SK-N-SH (cell line): ENCODE measurements at regions of chr13 and their contacts with region 1.

Region 1: DNA sequence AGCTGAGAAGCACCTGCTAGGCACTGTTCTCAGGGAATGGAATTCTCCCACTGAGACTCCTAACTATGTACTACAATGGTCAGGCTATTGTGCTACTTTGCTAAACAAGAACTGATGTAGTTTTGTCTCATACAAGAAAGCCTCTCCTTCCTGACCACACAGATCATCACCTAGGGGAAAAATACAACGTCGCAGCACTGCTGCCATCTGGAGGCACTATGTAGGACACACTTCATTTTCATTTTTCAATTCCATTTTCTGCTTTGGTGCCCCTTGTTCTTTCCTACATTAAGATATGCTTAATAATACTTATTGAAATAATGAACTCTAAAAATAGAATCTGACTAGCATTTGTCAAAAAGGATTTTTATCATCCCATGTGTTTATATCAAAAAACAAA is 21.1 kb downstream of the PROSER1 start:
- DNase-seq: peak; percentile 51
- H3K4me3 ChIP-seq: no peak overlapping the region
- H3K27ac ChIP-seq: no peak overlapping the region
- H3K4me1 ChIP-seq: no peaks in the 10 kb centered on the region
- H3K27me3 ChIP-seq: no peaks in the 10 kb centered on the region
- CTCF ChIP-seq: peak; percentile 61
- EP300 ChIP-seq: no peak
- RAD21 ChIP-seq: peak; percentile 75

Region 2: DNA sequence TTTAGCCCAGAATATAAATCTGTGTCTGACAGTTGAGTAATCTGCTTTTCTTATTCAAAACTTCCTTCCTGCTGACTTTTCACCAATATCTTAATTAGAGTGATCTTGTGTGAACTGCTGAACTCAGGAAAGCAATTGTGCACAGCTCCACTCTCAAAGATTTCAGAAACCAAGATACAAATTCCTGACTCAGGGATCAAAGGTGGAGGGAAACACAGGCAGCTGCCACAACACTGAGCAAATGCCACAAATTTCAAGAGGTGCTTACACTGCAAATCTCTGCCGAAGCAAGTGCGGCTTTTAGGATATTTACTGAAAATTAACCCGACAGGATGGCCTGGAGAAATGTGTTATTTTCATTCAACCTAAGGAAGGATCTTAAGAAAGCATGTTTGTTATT is 137.5 kb before region 1 on chr13:
- CTCF ChIA-PET with region 1: no interaction called
- POLR2A ChIA-PET with region 1: no interaction called
- DNase-seq: no peak
- H3K4me3 ChIP-seq: no peak overlapping the region
- H3K27ac ChIP-seq: no peak overlapping the region
- H3K4me1 ChIP-seq: no peaks in the 10 kb centered on the region
- H3K27me3 ChIP-seq: no peaks in the 10 kb centered on the region
- CTCF ChIP-seq: no peak
- EP300 ChIP-seq: no peak
- RAD21 ChIP-seq: no peak

Region 3: DNA sequence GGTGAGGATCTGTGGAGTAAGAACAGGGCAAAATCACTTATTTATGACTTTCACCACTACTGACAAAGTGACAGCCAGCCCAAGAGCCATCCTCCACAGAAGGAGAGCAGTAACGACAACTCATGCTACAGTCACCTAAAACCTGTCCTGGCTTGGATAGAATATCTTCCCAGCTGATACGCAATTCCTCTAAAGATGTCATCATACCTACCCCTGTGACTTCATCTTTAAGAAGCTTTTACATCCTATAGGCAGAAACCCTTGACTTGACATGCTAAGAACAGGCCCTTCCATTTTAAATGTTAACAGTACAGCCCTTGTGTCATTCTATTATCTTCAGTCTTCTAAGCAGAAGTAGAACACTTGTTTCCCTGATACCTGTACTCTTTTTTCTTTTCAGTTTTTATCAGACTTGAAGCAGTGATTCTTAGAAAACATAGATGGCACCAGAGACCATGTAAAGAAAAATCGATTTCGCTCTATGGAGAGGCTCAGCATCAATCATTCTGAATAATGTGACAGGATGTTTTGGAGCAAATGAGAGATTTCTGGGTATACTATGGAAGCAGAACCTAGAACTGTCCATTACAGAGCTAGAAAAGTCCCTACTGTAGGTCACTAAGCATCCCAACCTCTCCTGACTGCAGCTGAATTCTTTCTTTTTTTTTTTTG is 46.3 kb before region 1 on chr13:
- CTCF ChIA-PET with region 1: interaction called, 29 read pairs
- POLR2A ChIA-PET with region 1: no interaction called
- DNase-seq: peak; percentile 3
- H3K4me3 ChIP-seq: no peak overlapping the region
- H3K27ac ChIP-seq: no peak overlapping the region
- H3K4me1 ChIP-seq: no peaks in the 10 kb centered on the region
- H3K27me3 ChIP-seq: no peaks in the 10 kb centered on the region
- CTCF ChIP-seq: no peak
- EP300 ChIP-seq: no peak
- RAD21 ChIP-seq: peak; percentile 60

Region 4: DNA sequence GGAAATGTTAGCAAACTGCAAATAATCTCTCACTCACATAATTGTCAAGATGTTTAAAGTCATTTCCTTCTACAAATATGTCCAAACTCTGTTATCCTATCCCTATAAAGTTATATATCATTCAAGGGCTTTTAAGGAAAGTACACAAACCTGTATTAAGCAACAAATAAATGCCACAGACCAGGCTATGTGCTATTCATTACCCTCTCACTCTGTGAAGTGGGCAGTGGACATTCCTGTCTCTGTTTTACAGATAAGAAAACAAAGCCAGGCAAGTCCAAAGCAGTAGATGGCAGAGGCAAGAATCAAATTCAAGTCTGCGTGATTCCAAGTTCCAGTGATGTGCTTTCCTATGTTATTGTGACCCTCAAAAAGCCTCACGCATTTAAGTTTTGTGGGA is 445.6 kb after region 1 on chr13:
- CTCF ChIA-PET with region 1: no interaction called
- POLR2A ChIA-PET with region 1: no interaction called
- DNase-seq: no peak
- H3K4me3 ChIP-seq: no peak overlapping the region
- H3K27ac ChIP-seq: no peak overlapping the region; a peak in 1 of 4 replicates
- H3K4me1 ChIP-seq: no peaks in the 10 kb centered on the region; a peak in 2 of 4 replicates
- H3K27me3 ChIP-seq: no peaks in the 10 kb centered on the region
- CTCF ChIP-seq: no peak
- EP300 ChIP-seq: no peak
- RAD21 ChIP-seq: no peak